Naive thymus-derived CD4-positive, alpha-beta T cell (primary cell): ENCODE measurements at regions of chr9 and their contacts with region 1.

Region 1: GRCh38 chr9:124771021-124771866 is at the start of gene NR6A1:
- DNase-seq: peak; percentile 86 to 94 (median 91)
- ATAC-seq: peak; percentile 94
- H3K4me3 ChIP-seq: peak within 1 kb of the TSS; percentile 87
- H3K4me3 Mint-ChIP-seq: peak within 1 kb of the TSS; percentile 86 to 97 (median 91)
- H3K27ac ChIP-seq: no peak within 1 kb of the TSS
- H3K27ac Mint-ChIP-seq: peak within 1 kb of the TSS; percentile 39 to 93 (median 79)
- H3K4me1 ChIP-seq: peaks cover 13 to 20% of the 10 kb centered on the region in 2 donors
- H3K4me1 Mint-ChIP-seq: peaks cover 17 to 46% (median 42%) of the 10 kb centered on the region in 7 donors
- H3K27me3 ChIP-seq: peaks cover 7 to 38% of the 10 kb centered on the region in 2 donors
- H3K27me3 Mint-ChIP-seq: peaks cover 61 to 82% (median 75%) of the 10 kb centered on the region in 5 donors
- total RNA-seq, gene NR6A1: 0.21 to 0.78 (median 0.51) TPM in 3 of 5 experiments, not detected in the others

Region 2: GRCh38 chr9:124708633-124709291 is 62.5 kb before region 1 on chr9:
- CTCF ChIA-PET with region 1: no interaction called
- POLR2A ChIA-PET with region 1: no interaction called
- intact Hi-C with region 1: loop called in 1 of 2 experiments (anchors 5 kb)
- DNase-seq: no peak
- ATAC-seq: no peak
- H3K4me3 ChIP-seq: no peak overlapping the region
- H3K4me3 Mint-ChIP-seq: no peak overlapping the region
- H3K27ac ChIP-seq: no peak overlapping the region
- H3K27ac Mint-ChIP-seq: no peak overlapping the region
- H3K4me1 ChIP-seq: no peaks in the 10 kb centered on the region
- H3K4me1 Mint-ChIP-seq: peaks cover 0 to 5% (median 0%) of the 10 kb centered on the region in 7 donors
- H3K27me3 ChIP-seq: no peaks in the 10 kb centered on the region
- H3K27me3 Mint-ChIP-seq: peaks cover 9 to 44% (median 16%) of the 10 kb centered on the region in 5 donors

Region 3: DNA sequence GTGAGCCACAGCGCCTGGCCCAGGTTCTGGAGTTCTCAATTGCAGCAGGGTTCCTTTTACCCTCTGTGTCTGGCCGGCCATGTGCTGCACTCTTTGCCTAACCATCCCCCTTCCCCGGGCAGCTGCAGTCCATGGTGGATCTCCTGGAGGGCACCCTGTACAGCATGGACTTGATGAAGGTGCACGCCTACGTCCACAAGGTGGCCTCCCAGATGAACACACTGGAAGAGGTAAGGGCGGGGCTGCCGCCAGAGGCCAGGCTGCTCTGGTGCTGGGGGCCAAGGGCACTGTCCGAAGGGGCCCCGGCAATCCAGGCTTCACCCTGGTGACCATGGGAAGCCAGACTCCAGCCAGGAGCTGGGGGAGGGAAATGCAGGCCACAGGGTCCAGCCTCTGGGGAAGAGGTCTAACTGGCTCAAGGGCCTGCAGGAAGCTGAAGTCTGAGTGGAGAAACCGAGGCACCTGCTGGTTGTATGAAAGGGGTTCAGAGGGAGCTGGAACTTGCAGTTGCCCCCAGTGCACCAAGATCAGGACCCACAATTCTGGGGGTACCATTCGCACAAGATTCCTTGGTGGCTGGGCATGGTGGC is 23.8 kb after region 1 on chr9:
- CTCF ChIA-PET with region 1: no interaction called
- POLR2A ChIA-PET with region 1: no interaction called
- intact Hi-C with region 1: no loop called
- DNase-seq: no peak
- ATAC-seq: no peak
- H3K4me3 ChIP-seq: no peak overlapping the region
- H3K4me3 Mint-ChIP-seq: no peak overlapping the region
- H3K27ac ChIP-seq: no peak overlapping the region
- H3K27ac Mint-ChIP-seq: no peak overlapping the region
- H3K4me1 ChIP-seq: no peaks in the 10 kb centered on the region
- H3K4me1 Mint-ChIP-seq: peaks cover 0 to 2% (median 0%) of the 10 kb centered on the region in 7 donors
- H3K27me3 ChIP-seq: no peaks in the 10 kb centered on the region
- H3K27me3 Mint-ChIP-seq: peaks cover 11 to 25% (median 15%) of the 10 kb centered on the region in 5 donors

Region 4: GRCh38 chr9:124868511-124869465 is 97.5 kb after region 1 on chr9:
- CTCF ChIA-PET with region 1: no interaction called
- POLR2A ChIA-PET with region 1: interaction called, 4 read pairs
- intact Hi-C with region 1: loop called in 1 of 2 experiments (anchors 1 kb)
- DNase-seq: peak; percentile 84 to 99 (median 91)
- ATAC-seq: peak; percentile 89
- H3K4me3 ChIP-seq: peak overlapping the region; percentile 95
- H3K4me3 Mint-ChIP-seq: peak overlapping the region; percentile 87 to 96 (median 93)
- H3K27ac ChIP-seq: peak overlapping the region; percentile 87
- H3K27ac Mint-ChIP-seq: peak overlapping the region; percentile 82 to 98 (median 89)
- H3K4me1 ChIP-seq: peaks cover 29 to 39% of the 10 kb centered on the region in 2 donors
- H3K4me1 Mint-ChIP-seq: peaks cover 20 to 55% (median 47%) of the 10 kb centered on the region in 7 donors
- H3K27me3 ChIP-seq: no peaks in the 10 kb centered on the region
- H3K27me3 Mint-ChIP-seq: no peaks in the 10 kb centered on the region

Region 5: GRCh38 chr9:125126019-125126746 is 354.9 kb after region 1 on chr9:
- CTCF ChIA-PET with region 1: interaction called, 3 read pairs
- POLR2A ChIA-PET with region 1: no interaction called
- intact Hi-C with region 1: loop called in 1 of 2 experiments (anchors 5 kb)
- DNase-seq: peak; percentile 55 to 93 (median 88)
- ATAC-seq: peak; percentile 100
- H3K4me3 ChIP-seq: no peak overlapping the region
- H3K4me3 Mint-ChIP-seq: peak overlapping the region; percentile 67 to 87 (median 82)
- H3K27ac ChIP-seq: peak overlapping the region; percentile 27
- H3K27ac Mint-ChIP-seq: peak overlapping the region; percentile 84 to 98 (median 96)
- H3K4me1 ChIP-seq: peaks cover 18 to 36% of the 10 kb centered on the region in 2 donors
- H3K4me1 Mint-ChIP-seq: peaks cover 29 to 57% (median 38%) of the 10 kb centered on the region in 7 donors
- H3K27me3 ChIP-seq: no peaks in the 10 kb centered on the region
- H3K27me3 Mint-ChIP-seq: no peaks in the 10 kb centered on the region

Region 6: GRCh38 chr9:125200210-125201047 is 429.2 kb after region 1 on chr9 and contains the start of gene RABEPK:
- CTCF ChIA-PET with region 1: no interaction called
- POLR2A ChIA-PET with region 1: no interaction called
- intact Hi-C with region 1: loop called in 1 of 2 experiments (anchors 2 kb)
- DNase-seq: peak; percentile 76 to 97 (median 83)
- ATAC-seq: peak; percentile 99
- H3K4me3 ChIP-seq: peak within 1 kb of the TSS; percentile 90
- H3K4me3 Mint-ChIP-seq: peak within 1 kb of the TSS; percentile 80 to 96 (median 93)
- H3K27ac ChIP-seq: peak within 1 kb of the TSS; percentile 89
- H3K27ac Mint-ChIP-seq: peak within 1 kb of the TSS; percentile 80 to 96 (median 92)
- H3K4me1 ChIP-seq: peaks cover 20 to 34% of the 10 kb centered on the region in 2 donors
- H3K4me1 Mint-ChIP-seq: peaks cover 24 to 74% (median 56%) of the 10 kb centered on the region in 7 donors
- H3K27me3 ChIP-seq: no peaks in the 10 kb centered on the region
- H3K27me3 Mint-ChIP-seq: peaks cover 0 to 10% (median 0%) of the 10 kb centered on the region in 5 donors
- total RNA-seq, gene RABEPK: 10.7 to 19.5 (median 15.1) TPM

Region 7: GRCh38 chr9:125374443-125375309 is 603.4 kb after region 1 on chr9:
- CTCF ChIA-PET with region 1: interaction called, 4 read pairs
- POLR2A ChIA-PET with region 1: no interaction called
- intact Hi-C with region 1: loop called (anchors 1 kb)
- DNase-seq: peak; percentile 37 to 74 (median 64)
- ATAC-seq: peak; percentile 86
- H3K4me3 ChIP-seq: peak overlapping the region; percentile 46
- H3K4me3 Mint-ChIP-seq: peak overlapping the region in 8 of 10 donors; percentile 36 to 76 (median 64)
- H3K27ac ChIP-seq: no peak overlapping the region
- H3K27ac Mint-ChIP-seq: peak overlapping the region in 1 of 9 donors; percentile 55
- H3K4me1 ChIP-seq: peaks cover 0 to 9% of the 10 kb centered on the region in 2 donors
- H3K4me1 Mint-ChIP-seq: peaks cover 5 to 10% (median 6%) of the 10 kb centered on the region in 7 donors
- H3K27me3 ChIP-seq: no peaks in the 10 kb centered on the region
- H3K27me3 Mint-ChIP-seq: peaks cover 0 to 8% (median 2%) of the 10 kb centered on the region in 5 donors